ENCODE measurements at regions of chr11 and their contacts with region 1.

Region 1: GRCh38 chr11:85810871-85811611 is at the start of gene SYTL2:
- DNase-seq: peak; percentile 84 to 93
- H3K4me3 ChIP-seq: peak within 1 kb of the TSS; percentile 91
- H3K4me3 Mint-ChIP-seq: peak within 1 kb of the TSS; percentile 80
- H3K27ac Mint-ChIP-seq: peak within 1 kb of the TSS; percentile 44
- H3K4me1 ChIP-seq: peaks cover 29% of the 10 kb centered on the region
- H3K4me1 Mint-ChIP-seq: peaks cover 51% of the 10 kb centered on the region
- H3K27me3 ChIP-seq: no peaks in the 10 kb centered on the region
- H3K27me3 Mint-ChIP-seq: no peaks in the 10 kb centered on the region
- CTCF ChIP-seq: peak in 1 of 2 experiments; percentile 33
- total RNA-seq, gene SYTL2: 110 and 156 TPM in 2 replicates

Region 2: GRCh38 chr11:85664615-85665481 is 146.2 kb before region 1 on chr11 and contains the start of gene CREBZF:
- CTCF ChIA-PET with region 1: interaction called, 4 read pairs
- POLR2A ChIA-PET with region 1: interaction called, 6 read pairs
- intact Hi-C with region 1: loop called (anchors 1 kb)
- DNase-seq: peak; percentile 99 to 100
- H3K4me3 ChIP-seq: peak within 1 kb of the TSS; percentile 91
- H3K4me3 Mint-ChIP-seq: peak within 1 kb of the TSS; percentile 91
- H3K27ac Mint-ChIP-seq: peak within 1 kb of the TSS; percentile 87
- H3K4me1 ChIP-seq: 0 out of 2 replicates have a peak, but pooled peaks cover 9% of the 10 kb centered on the region
- H3K4me1 Mint-ChIP-seq: peaks cover 25% of the 10 kb centered on the region
- H3K27me3 ChIP-seq: no peaks in the 10 kb centered on the region
- H3K27me3 Mint-ChIP-seq: no peaks in the 10 kb centered on the region
- CTCF ChIP-seq: no peak
- total RNA-seq, gene CREBZF: 99.4 and 101 TPM in 2 replicates

Region 3: DNA sequence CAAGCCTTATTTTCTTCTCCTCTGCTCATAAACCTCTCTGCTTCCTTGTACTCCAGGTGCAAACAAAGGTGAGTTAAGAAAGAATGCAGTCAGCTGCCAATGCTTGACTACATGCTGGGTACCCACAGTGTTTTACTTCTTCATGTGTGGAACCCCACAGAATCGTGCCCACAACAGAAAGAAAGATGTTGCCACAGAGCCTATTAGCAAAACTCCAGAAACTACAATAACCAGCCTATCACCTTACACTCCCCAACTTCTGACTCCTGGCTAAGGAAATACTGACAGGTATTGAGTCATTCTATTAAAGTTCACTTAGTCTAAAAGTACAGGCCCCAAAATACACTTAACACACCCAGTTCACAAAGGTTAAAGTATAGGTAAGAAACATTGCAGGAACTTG is 68.2 kb before region 1 on chr11:
- CTCF ChIA-PET with region 1: no interaction called
- POLR2A ChIA-PET with region 1: no interaction called
- intact Hi-C with region 1: loop called (anchors 2 kb)
- DNase-seq: no peak
- H3K4me3 ChIP-seq: no peak overlapping the region
- H3K4me3 Mint-ChIP-seq: peak overlapping the region; percentile 15
- H3K27ac Mint-ChIP-seq: peak overlapping the region; percentile 56
- H3K4me1 ChIP-seq: peaks cover 30% of the 10 kb centered on the region
- H3K4me1 Mint-ChIP-seq: peaks cover 44% of the 10 kb centered on the region
- H3K27me3 ChIP-seq: no peaks in the 10 kb centered on the region
- H3K27me3 Mint-ChIP-seq: no peaks in the 10 kb centered on the region
- CTCF ChIP-seq: no peak

Region 4: DNA sequence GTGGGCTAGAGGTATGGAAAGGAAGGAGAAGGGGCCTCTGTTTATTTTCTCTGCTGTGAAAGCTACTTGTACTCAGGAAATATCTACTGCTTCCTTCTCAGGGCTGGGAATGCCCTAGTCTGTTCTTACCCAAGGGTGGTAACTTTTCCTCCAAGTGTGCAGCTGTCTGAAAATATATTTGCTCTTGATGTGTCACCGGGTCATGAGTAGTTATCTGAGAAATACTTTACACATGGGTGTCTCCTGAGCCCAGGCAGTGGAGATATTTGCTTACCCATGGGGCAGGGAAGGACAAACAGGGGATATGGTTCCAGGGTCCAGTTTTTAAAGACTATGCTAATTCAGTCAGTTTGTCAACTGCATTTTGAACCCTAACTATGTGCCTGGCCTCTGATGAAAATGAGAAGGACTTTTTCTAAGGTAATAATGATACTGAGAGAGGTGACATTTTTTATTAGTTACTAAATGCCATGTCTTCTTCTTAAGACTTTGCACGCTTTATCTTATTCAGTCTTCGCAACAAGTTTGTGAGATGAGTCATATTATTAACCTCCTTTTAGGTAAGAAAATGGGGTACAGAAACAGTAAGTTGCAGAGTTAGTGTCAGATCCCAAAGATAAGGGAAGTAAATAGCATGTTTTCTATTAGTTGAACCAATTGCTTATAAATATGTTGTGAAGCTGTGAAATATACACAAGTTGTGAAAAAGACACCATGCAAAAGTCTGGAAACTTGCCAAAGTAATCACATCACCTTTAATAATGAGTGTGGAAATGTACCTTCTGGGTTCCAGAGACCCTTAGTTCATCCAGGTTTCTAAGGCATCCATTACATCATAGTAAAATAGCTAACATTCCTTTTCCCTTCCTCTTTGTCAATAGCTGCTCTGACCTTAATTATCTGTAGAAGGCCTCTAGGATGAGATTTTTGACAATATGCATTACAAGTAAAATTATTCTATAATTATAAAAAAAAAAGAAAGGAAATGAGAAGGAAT is 22.9 kb before region 1 on chr11:
- CTCF ChIA-PET with region 1: interaction called, 5 read pairs
- POLR2A ChIA-PET with region 1: no interaction called
- intact Hi-C with region 1: loop called (anchors 1 kb)
- DNase-seq: peak; percentile 79 to 91
- H3K4me3 ChIP-seq: no peak overlapping the region
- H3K4me3 Mint-ChIP-seq: peak overlapping the region; percentile 61
- H3K27ac Mint-ChIP-seq: peak overlapping the region; percentile 86
- H3K4me1 ChIP-seq: peaks cover 69% of the 10 kb centered on the region
- H3K4me1 Mint-ChIP-seq: peaks cover 62% of the 10 kb centered on the region
- H3K27me3 ChIP-seq: no peaks in the 10 kb centered on the region
- H3K27me3 Mint-ChIP-seq: no peaks in the 10 kb centered on the region
- CTCF ChIP-seq: no peak

Region 5: DNA sequence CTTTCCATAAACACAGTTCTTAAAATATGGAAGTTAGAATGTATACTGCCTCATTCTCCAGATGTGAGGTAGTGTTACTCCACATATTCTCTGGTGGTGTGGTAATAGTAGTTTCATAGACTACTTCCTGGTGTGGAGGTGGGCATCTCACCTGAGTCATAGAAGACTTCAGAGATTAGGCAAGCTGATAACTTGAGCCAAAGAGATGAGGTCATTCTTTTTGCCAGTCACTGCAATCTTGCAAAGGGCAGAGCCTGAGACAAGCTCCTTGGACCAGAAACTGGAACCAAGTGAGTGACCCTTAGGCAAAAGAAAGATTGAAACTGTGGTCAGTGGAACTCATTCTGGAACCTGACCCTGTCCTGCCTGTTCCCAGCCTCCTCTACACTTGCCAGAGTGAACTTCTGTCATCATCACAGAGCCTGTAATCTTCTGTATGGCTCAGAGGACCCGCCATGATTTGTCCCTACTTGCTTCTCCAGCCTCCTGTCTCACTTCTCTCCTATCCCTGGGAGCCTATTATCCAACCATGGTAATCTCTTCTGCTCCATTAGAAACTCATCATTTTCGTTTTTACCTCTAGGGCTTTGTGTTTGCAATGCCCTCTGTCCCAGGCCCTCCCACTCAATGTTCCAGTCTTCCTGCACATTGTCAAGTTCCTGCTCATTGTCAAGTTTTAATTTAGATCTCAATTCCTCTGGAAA is 33.5 kb after region 1 on chr11:
- CTCF ChIA-PET with region 1: interaction called, 3 read pairs
- POLR2A ChIA-PET with region 1: no interaction called
- intact Hi-C with region 1: loop called (anchors 2 kb)
- DNase-seq: peak; percentile 62 to 68
- H3K4me3 ChIP-seq: no peak overlapping the region
- H3K4me3 Mint-ChIP-seq: no peak overlapping the region
- H3K27ac Mint-ChIP-seq: no peak overlapping the region
- H3K4me1 ChIP-seq: peaks cover 14% of the 10 kb centered on the region; the same call in 1 of the 2 replicates
- H3K4me1 Mint-ChIP-seq: peaks cover 14% of the 10 kb centered on the region
- H3K27me3 ChIP-seq: no peaks in the 10 kb centered on the region
- H3K27me3 Mint-ChIP-seq: no peaks in the 10 kb centered on the region
- CTCF ChIP-seq: no peak